K562 (cell line): ENCODE measurements at regions of chr10 and their contacts with region 1.

Region 1: DNA sequence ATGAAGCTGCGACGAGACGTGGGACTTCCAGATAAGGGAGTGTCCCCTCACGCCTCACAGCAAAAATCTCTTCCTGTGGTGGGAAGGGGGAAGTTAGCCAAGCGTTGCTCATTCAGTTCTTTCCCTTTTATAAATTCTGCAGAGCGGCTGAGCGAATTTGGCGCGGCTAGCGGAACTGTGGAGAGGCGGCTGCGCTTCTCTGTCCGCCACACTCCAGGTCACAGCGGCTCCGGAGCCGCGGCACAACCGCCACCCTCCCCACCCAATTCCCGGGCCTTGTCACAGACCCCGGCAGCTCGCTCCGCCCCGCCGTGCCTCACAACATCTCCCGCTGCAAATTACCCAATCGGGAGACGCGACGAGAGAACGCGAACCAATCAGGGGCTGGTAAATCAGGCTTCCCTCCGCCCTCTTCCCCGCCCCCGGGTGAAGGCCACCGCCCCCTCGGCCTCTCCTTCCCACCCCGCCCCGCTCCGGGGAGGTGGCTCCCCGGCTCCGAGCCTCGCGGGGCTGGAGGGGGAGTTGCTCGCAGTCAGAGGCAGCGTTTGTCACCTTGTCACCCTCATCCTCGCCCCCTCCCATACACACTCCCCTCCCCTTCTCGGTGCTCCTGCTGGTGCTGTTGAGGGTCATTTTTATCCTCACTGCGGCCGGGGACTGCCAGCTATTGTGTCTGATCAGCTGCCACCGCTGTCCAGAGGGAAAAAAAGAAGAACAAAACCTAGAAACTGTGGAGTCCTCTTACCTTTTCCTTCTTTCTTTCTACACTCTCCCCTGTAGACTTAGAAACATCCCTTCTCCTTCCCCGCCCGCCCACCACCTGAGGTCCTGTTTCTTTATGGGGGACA is 918 bp upstream of the ARHGAP21 start:
- DNase-seq: peak; percentile 98 to 99 (median 98)
- ATAC-seq: peak; percentile 86
- H3K4me3 ChIP-seq: peak overlapping the region; percentile 81
- H3K27ac ChIP-seq: peak overlapping the region; percentile 87
- H3K4me1 ChIP-seq: peaks cover 3 to 22% of the 10 kb centered on the region in 2 experiments; a peak in 3 of 5 replicates
- H3K27me3 ChIP-seq: no peaks in the 10 kb centered on the region
- CTCF ChIP-seq: no peak
- EP300 ChIP-seq: no peak
- POLR2A ChIP-seq: peak; percentile 89
- RAD21 ChIP-seq: peak in 1 of 2 experiments; percentile 16; a peak in 1 of 4 replicates

Region 2: GRCh38 chr10:24642622-24643417 is 81.8 kb before region 1 on chr10:
- CTCF ChIA-PET with region 1: no interaction called
- POLR2A ChIA-PET with region 1: no interaction called
- in situ Hi-C with region 1: no loop called
- intact Hi-C with region 1: loop called (anchors 2 kb)
- DNase-seq: peak; percentile 21 to 72 (median 34)
- ATAC-seq: peak; percentile 92
- H3K4me3 ChIP-seq: no peak overlapping the region
- H3K27ac ChIP-seq: no peak overlapping the region
- H3K4me1 ChIP-seq: peaks cover 0 to 29% of the 10 kb centered on the region in 2 experiments; a peak in 4 of 5 replicates
- H3K27me3 ChIP-seq: no peaks in the 10 kb centered on the region
- CTCF ChIP-seq: peak; percentile 61 to 84 (median 80)
- EP300 ChIP-seq: no peak
- POLR2A ChIP-seq: no peak
- RAD21 ChIP-seq: peak; percentile 89 to 93

Region 3: GRCh38 chr10:24706479-24707118 is 18.0 kb before region 1 on chr10:
- CTCF ChIA-PET with region 1: no interaction called
- POLR2A ChIA-PET with region 1: interaction called, 11 read pairs
- in situ Hi-C with region 1: no loop called
- intact Hi-C with region 1: no loop called
- DNase-seq: peak in 2 of 4 experiments; percentile 46 to 58
- ATAC-seq: peak; percentile 76
- H3K4me3 ChIP-seq: no peak overlapping the region
- H3K27ac ChIP-seq: no peak overlapping the region
- H3K4me1 ChIP-seq: peaks cover 0 to 33% of the 10 kb centered on the region in 2 experiments; a peak in 4 of 5 replicates
- H3K27me3 ChIP-seq: no peaks in the 10 kb centered on the region
- CTCF ChIP-seq: no peak
- EP300 ChIP-seq: no peak
- POLR2A ChIP-seq: no peak
- RAD21 ChIP-seq: no peak

Region 4: DNA sequence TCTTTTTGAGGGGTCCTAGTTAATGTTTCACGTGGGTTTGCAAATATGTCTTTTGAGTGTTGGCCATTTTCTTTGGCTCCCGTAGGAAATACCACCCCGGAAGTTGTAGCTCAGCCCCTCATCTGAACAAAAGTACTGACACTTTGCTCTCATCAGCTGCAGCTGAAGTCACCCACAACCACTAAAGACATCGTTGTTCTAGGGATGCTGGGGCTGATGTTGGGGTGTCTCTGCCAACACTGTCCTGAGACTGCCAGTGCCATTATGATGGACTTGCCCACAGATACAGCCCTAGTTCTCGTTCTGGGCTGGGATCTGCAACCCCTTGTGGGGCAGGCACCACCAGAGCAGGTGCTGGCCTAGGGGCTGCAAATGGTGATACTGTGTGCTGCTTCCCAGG is 81.7 kb after region 1 on chr10:
- CTCF ChIA-PET with region 1: no interaction called
- POLR2A ChIA-PET with region 1: no interaction called
- in situ Hi-C with region 1: no loop called
- intact Hi-C with region 1: no loop called
- DNase-seq: no peak
- ATAC-seq: no peak; the same call in 2 of the 3 replicates
- H3K4me3 ChIP-seq: no peak overlapping the region
- H3K27ac ChIP-seq: no peak overlapping the region
- H3K4me1 ChIP-seq: no peaks in the 10 kb centered on the region
- H3K27me3 ChIP-seq: no peaks in the 10 kb centered on the region
- CTCF ChIP-seq: no peak
- EP300 ChIP-seq: no peak
- POLR2A ChIP-seq: no peak
- RAD21 ChIP-seq: no peak

Region 5: GRCh38 chr10:24920907-24921881 is 196.6 kb after region 1 on chr10:
- CTCF ChIA-PET with region 1: no interaction called
- POLR2A ChIA-PET with region 1: no interaction called
- in situ Hi-C with region 1: no loop called
- intact Hi-C with region 1: loop called (anchors 5 kb)
- DNase-seq: peak; percentile 72 to 96 (median 83)
- ATAC-seq: peak; percentile 98
- H3K4me3 ChIP-seq: no peak overlapping the region
- H3K27ac ChIP-seq: peak overlapping the region; percentile 88
- H3K4me1 ChIP-seq: peaks cover 15 to 18% of the 10 kb centered on the region in 2 experiments
- H3K27me3 ChIP-seq: no peaks in the 10 kb centered on the region
- CTCF ChIP-seq: peak in 2 of 3 experiments; percentile 10 to 14; a peak in 1 of 6 replicates
- EP300 ChIP-seq: peak; percentile 97
- POLR2A ChIP-seq: no peak; the same call in 1 of the 2 replicates
- RAD21 ChIP-seq: peak in 1 of 2 experiments; percentile 47; a peak in 3 of 4 replicates

Region 6: GRCh38 chr10:24952707-24953645 is 228.4 kb after region 1 on chr10:
- CTCF ChIA-PET with region 1: interaction called, 3 read pairs
- POLR2A ChIA-PET with region 1: no interaction called
- in situ Hi-C with region 1: no loop called
- intact Hi-C with region 1: loop called (anchors 2 kb)
- DNase-seq: peak; percentile 64 to 80 (median 76)
- ATAC-seq: peak; percentile 80
- H3K4me3 ChIP-seq: peak overlapping the region; percentile 52
- H3K27ac ChIP-seq: peak overlapping the region; percentile 85
- H3K4me1 ChIP-seq: peaks cover 18 to 21% of the 10 kb centered on the region in 2 experiments; a peak in 4 of 5 replicates
- H3K27me3 ChIP-seq: no peaks in the 10 kb centered on the region
- CTCF ChIP-seq: peak; percentile 35 to 60 (median 37); a peak in 3 of 6 replicates
- EP300 ChIP-seq: no peak
- POLR2A ChIP-seq: no peak; the same call in 1 of the 2 replicates
- RAD21 ChIP-seq: peak; percentile 22 to 47

Region 7: GRCh38 chr10:24989867-24990266 is 265.3 kb after region 1 on chr10:
- CTCF ChIA-PET with region 1: no interaction called
- POLR2A ChIA-PET with region 1: interaction called, 3 read pairs
- in situ Hi-C with region 1: no loop called
- intact Hi-C with region 1: loop called (anchors 5 kb)
- DNase-seq: no peak
- ATAC-seq: no peak
- H3K4me3 ChIP-seq: no peak overlapping the region
- H3K27ac ChIP-seq: no peak overlapping the region
- H3K4me1 ChIP-seq: peaks cover 9 to 11% of the 10 kb centered on the region in 2 experiments
- H3K27me3 ChIP-seq: no peaks in the 10 kb centered on the region
- CTCF ChIP-seq: peak in 1 of 3 experiments; percentile 31; a peak in 2 of 6 replicates
- EP300 ChIP-seq: no peak
- POLR2A ChIP-seq: no peak
- RAD21 ChIP-seq: peak; percentile 20 to 52; a peak in 3 of 4 replicates

Region 8: DNA sequence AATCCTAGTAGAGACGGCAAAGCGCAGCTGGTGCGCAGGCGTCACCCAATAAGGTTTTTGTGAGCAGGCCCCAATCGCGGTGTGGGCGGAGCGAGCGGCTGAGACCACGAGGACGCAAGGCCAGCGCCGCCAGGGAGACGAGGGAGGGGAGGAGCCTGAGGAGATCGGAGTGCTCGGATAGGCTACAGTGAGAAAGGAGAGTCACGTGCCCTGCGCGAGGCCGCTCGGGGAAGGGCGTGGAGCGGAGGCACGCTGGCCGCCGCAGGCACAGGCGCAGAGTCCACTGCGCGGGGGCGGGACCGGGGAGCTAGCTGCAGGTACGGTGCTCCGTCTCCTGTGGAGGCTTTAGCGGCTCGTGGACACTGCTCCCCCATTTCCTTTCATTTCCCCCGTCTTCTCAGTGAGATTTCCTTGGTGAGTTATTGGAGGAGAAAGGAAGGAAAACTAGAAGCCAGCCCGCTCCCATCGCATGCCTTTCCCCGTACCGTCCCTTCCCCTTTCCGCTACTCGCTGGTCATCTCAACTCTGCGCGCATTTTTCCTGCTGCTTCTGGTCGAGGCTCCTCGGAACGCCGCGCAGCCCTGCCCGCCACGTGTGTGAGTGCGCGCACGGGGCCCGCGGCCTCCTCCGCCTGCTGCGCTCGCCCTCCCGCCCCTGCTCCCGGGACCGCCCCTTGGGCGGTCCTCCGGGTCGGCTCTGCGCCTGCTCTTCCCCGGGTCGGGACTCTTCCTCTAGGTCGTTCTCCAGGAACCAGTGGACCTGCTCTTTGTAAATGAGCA is 292.0 kb after region 1 on chr10 and contains the start of gene THNSL1:
- CTCF ChIA-PET with region 1: no interaction called
- POLR2A ChIA-PET with region 1: no interaction called
- in situ Hi-C with region 1: no loop called
- intact Hi-C with region 1: loop called (anchors 10 kb)
- DNase-seq: peak; percentile 96 to 99 (median 97)
- ATAC-seq: peak; percentile 99
- H3K4me3 ChIP-seq: peak within 1 kb of the TSS; percentile 49
- H3K27ac ChIP-seq: peak within 1 kb of the TSS; percentile 94
- H3K4me1 ChIP-seq: peaks cover 7 to 9% of the 10 kb centered on the region in 2 experiments
- H3K27me3 ChIP-seq: no peaks in the 10 kb centered on the region
- CTCF ChIP-seq: 0 out of 6 replicates have a peak, but pooled peaks of 1 of the 3 experiments have one; percentile 2
- EP300 ChIP-seq: no peak; the same call in 1 of the 2 replicates
- POLR2A ChIP-seq: peak; percentile 94
- RAD21 ChIP-seq: no peak
- polyA plus RNA-seq, gene THNSL1: 5.9 to 7.6 TPM